Activated CD4-positive, alpha-beta memory T cell treated with anti-CD3 and anti-CD28 coated beads, Interleukin-2, amount 10 ng/mL, durations not matched to agents 7 days and 5 days (primary cell): ENCODE measurements at regions of chr6 and their contacts with region 1.

Region 1: DNA sequence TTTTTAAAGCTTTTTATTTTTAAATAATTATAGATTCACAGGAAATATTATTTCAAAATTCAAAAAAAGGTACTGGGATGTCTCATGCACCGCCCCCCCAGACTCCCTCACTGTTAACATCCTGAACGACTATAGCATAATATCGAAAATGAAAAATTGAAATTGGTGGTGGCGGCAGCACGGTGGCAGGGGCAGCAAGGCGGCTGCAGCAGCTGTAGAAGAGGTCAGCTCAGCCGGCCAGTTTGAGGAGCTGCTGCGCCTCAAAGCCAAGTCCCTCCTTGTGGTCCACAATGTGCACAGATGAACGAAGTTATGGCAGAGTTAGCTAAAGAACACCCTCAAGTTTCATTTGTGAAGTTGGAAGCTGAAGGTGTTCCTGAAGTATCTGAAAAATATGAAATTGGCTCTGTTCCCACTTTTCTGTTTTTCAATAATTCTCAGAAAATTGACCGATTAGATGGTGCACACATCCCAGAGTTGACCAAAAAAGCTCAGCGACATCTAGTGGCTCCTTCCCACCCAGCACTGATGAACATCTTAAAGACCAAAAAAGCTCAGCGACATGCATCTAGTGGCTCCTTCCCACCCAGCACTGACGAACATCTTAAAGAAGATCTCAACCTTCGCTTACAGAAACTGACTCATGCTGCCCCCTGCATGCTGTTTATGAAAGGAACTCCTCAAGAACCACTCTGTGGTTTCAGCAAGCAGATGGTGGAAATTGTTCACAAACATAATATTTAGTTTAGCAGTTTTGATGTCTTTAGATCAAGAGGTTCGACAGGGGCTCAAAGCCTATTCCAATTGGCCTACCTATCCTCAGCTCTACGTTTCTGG is 100.8 kb downstream of the FAM217A start:
- DNase-seq: peak; percentile 52
- H3K4me3 Mint-ChIP-seq: no peak overlapping the region
- H3K27ac Mint-ChIP-seq: no peak overlapping the region
- H3K4me1 Mint-ChIP-seq: peaks cover 8% of the 10 kb centered on the region
- H3K27me3 Mint-ChIP-seq: peaks cover 16% of the 10 kb centered on the region

Region 2: DNA sequence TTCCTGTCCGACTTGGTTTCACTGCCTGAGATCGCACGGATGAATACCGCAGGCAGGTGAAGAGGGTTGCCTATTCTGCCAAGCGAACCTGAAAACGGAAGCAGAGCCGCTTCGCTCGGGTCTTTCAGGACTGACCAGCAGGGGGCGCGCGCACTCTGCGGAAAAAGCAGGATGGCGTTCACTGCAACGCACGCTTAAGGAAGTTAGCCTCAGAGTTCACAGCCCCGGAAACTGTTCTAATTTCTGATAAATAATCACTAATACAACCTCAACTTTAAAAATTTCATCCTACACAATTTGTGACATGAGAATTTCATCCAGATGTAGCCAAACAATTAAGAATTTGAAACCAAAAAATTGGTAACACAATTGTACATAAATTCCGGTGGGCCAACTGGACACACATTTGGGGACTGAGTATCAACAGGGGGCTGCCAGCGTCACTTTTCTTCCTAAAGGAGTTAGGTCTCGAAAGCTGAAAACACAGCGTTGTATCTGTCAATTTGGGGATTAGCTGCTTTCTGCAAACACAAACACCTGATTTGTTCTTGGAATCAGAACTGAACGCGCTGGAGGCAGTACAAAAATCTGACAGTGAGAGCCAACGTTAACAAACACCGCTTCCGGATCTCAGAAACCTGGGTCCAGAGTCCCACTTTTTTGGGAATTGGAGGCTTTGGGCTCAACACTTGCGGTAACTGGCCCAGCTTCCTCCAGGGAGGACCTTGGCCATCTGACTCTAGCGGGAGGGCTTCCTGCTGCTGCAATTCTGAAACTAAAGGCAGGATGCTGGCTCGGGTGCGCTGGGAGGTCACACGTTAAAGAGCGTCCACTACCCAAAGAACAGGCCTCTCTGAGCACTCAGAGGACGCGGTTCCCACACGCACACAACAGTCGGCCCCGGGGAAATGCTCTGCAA is 235.4 kb before region 1 on chr6:
- CTCF ChIA-PET with region 1: interaction called, 85 read pairs
- POLR2A ChIA-PET with region 1: no interaction called
- DNase-seq: peak; percentile 89
- H3K4me3 Mint-ChIP-seq: peak overlapping the region; percentile 44
- H3K27ac Mint-ChIP-seq: peak overlapping the region; percentile 42
- H3K4me1 Mint-ChIP-seq: peaks cover 17% of the 10 kb centered on the region
- H3K27me3 Mint-ChIP-seq: peaks cover 6% of the 10 kb centered on the region

Region 3: GRCh38 chr6:3755637-3756545 is 222.2 kb before region 1 on chr6:
- CTCF ChIA-PET with region 1: interaction called, 13 read pairs
- POLR2A ChIA-PET with region 1: no interaction called
- DNase-seq: no peak
- H3K4me3 Mint-ChIP-seq: no peak overlapping the region
- H3K27ac Mint-ChIP-seq: no peak overlapping the region
- H3K4me1 Mint-ChIP-seq: peaks cover 3% of the 10 kb centered on the region
- H3K27me3 Mint-ChIP-seq: peaks cover 22% of the 10 kb centered on the region

Region 4: GRCh38 chr6:3929281-3929798 is 48.8 kb before region 1 on chr6:
- CTCF ChIA-PET with region 1: interaction called, 13 read pairs
- POLR2A ChIA-PET with region 1: no interaction called
- DNase-seq: no peak
- H3K4me3 Mint-ChIP-seq: no peak overlapping the region
- H3K27ac Mint-ChIP-seq: no peak overlapping the region
- H3K4me1 Mint-ChIP-seq: no peaks in the 10 kb centered on the region
- H3K27me3 Mint-ChIP-seq: no peaks in the 10 kb centered on the region

Region 5: DNA sequence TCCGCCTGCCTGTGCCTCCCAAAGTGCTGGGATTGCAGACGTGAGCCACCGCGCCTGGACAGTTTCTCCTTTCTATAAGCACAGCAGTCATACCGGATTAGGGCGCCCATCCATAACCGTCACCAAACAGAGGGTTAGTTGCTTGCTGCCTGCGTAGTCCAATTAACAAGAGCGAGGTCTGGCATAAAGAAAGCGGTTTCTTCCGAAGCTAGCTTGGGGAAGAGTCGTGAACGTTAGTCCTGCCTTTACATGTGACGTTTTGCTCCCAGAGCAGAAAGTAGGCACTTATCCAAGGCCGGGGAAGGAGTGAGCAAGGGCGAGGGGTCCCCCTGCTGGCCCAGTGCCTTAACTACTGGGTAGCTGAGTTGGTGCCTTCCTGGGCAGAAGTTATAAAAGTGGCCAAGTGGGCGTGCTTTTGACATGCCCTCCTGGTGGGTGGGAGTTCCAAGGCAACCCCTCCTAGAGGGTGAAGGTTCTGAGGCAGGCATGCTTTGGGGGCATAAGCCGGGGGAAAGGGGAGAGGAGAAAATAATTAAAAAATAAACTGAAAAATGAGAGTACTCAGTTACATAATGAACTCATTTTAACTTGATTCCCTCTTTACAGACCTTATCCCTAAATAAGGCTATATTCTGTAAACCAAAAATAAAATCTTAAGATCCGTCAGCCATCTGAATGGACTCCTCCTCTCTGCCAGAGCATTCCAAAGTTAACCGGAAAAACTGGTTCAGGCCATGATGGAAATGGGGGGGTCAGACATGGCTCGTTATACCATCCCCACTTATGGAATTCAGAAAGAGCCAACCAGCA is 12.8 kb after region 1 on chr6:
- CTCF ChIA-PET with region 1: interaction called, 41 read pairs
- POLR2A ChIA-PET with region 1: no interaction called
- DNase-seq: peak; percentile 73
- H3K4me3 Mint-ChIP-seq: no peak overlapping the region
- H3K27ac Mint-ChIP-seq: no peak overlapping the region
- H3K4me1 Mint-ChIP-seq: peaks cover 6% of the 10 kb centered on the region
- H3K27me3 Mint-ChIP-seq: no peaks in the 10 kb centered on the region

Region 6: DNA sequence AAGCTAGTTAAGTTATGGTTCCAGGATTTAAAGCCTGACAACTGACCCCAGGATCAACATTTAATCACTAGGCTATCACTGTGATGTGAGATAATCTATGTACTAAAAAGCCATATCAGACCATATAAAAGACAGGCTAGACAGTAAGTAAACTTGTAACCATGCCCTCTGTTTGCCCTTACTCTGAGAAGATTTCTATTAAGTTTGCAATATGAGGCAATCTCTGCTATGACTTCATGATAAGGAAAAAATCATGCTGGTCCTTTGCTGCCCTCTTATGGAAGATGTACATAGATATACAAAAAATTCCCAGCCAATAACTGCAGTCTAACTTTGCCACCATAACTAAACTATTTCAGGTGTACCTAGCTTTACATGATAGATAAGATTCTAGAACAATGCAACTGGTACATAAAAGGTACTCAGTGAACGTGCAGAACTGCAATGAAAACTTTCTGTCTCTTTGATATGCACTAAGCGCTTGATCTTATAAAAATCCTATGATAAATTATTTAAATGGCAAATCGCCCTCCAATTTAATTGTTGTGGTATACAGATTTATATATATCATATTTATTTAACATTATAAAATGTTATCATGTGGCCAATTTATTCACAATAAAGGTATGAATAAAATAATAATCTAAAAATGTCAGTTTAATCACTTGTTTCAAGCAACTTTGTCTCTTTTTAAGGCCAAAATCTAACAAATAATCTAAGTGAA is 30.4 kb after region 1 on chr6:
- CTCF ChIA-PET with region 1: interaction called, 26 read pairs
- POLR2A ChIA-PET with region 1: interaction called, 3 read pairs
- DNase-seq: no peak
- H3K4me3 Mint-ChIP-seq: no peak overlapping the region
- H3K27ac Mint-ChIP-seq: peak overlapping the region; percentile 5
- H3K4me1 Mint-ChIP-seq: peaks cover 48% of the 10 kb centered on the region
- H3K27me3 Mint-ChIP-seq: no peaks in the 10 kb centered on the region